ENCODE measurements at regions of chr19 and their contacts with region 1.

Region 1: DNA sequence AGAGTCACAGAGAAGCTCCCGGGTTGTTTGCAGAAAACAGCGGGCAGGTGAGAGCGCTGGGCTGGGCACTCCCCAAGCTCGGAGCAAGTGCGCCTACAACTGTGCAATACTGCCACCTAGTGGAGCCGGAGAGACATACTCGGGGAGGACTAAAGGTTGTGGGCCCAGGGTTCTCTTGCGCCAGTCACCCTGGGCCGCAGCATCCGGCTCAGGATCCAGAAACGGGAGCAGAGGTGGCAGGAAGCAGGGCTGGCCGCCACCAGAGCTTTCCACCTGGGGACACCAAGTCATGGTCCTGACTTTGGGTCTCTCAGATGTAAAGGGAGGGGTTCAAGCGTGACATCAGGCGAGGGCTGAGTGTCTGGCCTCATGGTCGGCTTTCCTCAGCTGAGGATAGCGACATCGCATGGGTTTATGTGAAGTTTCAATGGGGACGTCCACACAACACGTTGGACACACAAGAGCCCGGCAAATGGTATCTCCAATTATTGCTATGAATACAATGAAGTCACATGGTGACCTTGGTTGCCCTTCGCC is 11.2 kb upstream of the KLK4 start:
- DNase-seq: peak; percentile 65
- H3K4me3 Mint-ChIP-seq: no peak overlapping the region
- H3K27ac Mint-ChIP-seq: no peak overlapping the region
- H3K4me1 Mint-ChIP-seq: peaks cover 9% of the 10 kb centered on the region
- H3K27me3 Mint-ChIP-seq: peaks cover 14% of the 10 kb centered on the region

Region 2: GRCh38 chr19:50607874-50608785 is 314.3 kb before region 1 on chr19:
- intact Hi-C with region 1: loop called (anchors 5 kb)
- DNase-seq: peak; percentile 63
- H3K4me3 Mint-ChIP-seq: peak overlapping the region; percentile 32
- H3K27ac Mint-ChIP-seq: no peak overlapping the region
- H3K4me1 Mint-ChIP-seq: peaks cover 6% of the 10 kb centered on the region
- H3K27me3 Mint-ChIP-seq: peaks cover 10% of the 10 kb centered on the region

Region 3: DNA sequence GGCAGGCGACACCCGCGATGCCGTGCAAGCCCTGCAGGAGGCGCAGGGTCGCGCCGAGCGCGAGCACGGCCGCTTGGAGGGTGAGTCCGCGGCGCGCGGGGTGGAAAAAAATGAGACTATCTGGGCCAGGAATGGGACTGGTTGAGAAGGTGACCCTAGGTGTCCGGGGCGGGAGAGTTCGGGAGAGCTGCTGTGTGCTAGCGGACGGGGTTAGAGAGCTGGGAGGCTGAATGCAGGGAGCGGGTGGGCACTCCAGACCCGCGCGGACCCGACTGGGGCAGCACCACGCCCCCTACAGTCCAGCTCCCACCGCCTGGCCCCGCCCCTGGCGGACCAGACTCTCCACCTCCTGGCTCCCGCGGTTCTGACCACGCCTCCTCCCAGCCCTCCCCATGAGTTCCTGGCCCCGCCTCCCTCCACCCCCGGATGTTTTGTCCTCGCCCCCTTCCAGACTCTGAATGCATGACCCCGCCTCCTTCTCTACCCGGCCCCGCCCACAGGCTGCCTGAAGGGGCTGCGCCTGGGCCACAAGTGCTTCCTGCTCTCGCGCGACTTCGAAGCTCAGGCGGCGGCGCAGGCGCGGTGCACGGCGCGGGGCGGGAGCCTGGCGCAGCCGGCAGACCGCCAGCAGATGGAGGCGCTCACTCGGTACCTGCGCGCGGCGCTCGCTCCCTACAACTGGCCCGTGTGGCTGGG is 197.7 kb before region 1 on chr19:
- intact Hi-C with region 1: loop called (anchors 1 kb)
- DNase-seq: peak; percentile 97
- H3K4me3 Mint-ChIP-seq: peak overlapping the region; percentile 85
- H3K27ac Mint-ChIP-seq: peak overlapping the region; percentile 78
- H3K4me1 Mint-ChIP-seq: no peaks in the 10 kb centered on the region
- H3K27me3 Mint-ChIP-seq: peaks cover 38% of the 10 kb centered on the region

Region 4: DNA sequence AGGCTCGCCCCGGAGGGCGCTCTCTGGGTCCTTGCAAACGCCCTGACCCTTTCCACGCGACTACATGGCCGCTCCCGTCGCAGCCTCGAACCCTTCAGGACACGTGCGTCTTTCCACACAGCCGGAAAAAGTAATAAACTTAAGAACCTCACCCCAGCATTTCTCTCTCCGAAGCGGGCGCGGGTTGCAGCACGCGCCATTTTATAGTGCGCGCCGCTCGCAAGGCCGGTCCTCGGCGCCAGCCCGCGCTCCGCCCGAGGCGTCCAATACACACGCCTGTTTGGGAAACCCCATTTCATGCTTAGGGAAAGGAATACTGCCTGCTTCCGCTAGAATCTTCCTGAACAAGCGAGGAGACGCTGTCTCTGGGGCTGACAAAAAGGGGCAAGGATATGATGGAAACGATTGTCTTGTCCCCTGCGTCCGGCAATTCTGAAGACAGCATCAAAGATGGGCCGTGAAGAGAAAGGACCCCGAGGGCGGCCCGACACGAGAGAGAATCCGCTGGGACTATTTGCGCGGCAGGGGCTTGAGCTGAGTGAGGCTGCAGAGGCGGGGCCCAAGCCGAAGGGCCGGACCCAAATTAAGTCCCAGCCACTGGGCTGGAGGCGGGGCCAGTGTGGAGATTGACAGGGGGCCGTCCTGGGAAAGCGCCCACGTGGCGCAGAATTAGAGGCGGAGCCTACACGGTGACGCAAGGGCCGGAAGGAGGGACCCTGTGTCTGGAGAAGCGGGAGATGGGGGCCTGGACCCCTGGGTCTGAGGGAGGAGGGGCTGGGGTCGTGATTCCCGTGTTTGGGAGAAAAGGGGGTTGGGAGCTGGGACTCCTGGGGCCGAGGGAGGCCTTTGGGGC is 117.7 kb before region 1 on chr19:
- intact Hi-C with region 1: loop called (anchors 1 kb)
- DNase-seq: peak; percentile 97
- H3K4me3 Mint-ChIP-seq: peak overlapping the region; percentile 96
- H3K27ac Mint-ChIP-seq: peak overlapping the region; percentile 98
- H3K4me1 Mint-ChIP-seq: peaks cover 27% of the 10 kb centered on the region
- H3K27me3 Mint-ChIP-seq: no peaks in the 10 kb centered on the region

Region 5: GRCh38 chr19:50851620-50852019 is 70.8 kb before region 1 on chr19:
- intact Hi-C with region 1: no loop called
- DNase-seq: no peak
- H3K4me3 Mint-ChIP-seq: no peak overlapping the region
- H3K27ac Mint-ChIP-seq: no peak overlapping the region
- H3K4me1 Mint-ChIP-seq: no peaks in the 10 kb centered on the region
- H3K27me3 Mint-ChIP-seq: peaks cover 9% of the 10 kb centered on the region